ENCODE measurements at regions of chr14 and their contacts with region 1.

Region 1: DNA sequence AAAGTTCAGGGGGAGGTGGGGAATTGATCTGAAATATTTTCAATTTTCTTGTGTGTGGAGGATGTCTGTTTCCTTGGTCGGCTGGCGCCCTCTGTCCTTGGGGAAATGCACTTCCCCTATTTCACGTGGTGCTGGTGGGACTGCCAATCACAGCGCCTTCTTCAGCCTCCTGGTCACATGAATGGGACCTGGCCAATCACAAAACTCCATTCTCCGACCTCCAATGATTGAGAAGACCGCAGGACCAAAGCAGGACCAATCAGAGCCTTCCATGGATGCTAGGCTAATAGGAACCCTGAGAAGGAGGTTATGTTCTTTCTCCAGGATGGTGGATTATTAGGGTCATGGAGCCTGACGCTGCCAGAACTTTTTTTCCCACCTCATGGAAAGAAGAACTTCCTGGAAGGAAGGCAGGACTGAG is 188.6 kb downstream of the TTC8 start:
- DNase-seq: peak; percentile 82
- H3K4me3 ChIP-seq: peak overlapping the region; percentile 15
- H3K27ac ChIP-seq: peak overlapping the region; percentile 50
- H3K4me1 ChIP-seq: no peaks in the 10 kb centered on the region
- H3K27me3 ChIP-seq: no peaks in the 10 kb centered on the region
- CTCF ChIP-seq: peak; percentile 54

Region 2: GRCh38 chr14:88919502-88919901 is 93.6 kb before region 1 on chr14:
- intact Hi-C with region 1: loop called (anchors 5 kb)
- DNase-seq: peak; percentile 46
- H3K4me3 ChIP-seq: no peak overlapping the region
- H3K27ac ChIP-seq: no peak overlapping the region
- H3K4me1 ChIP-seq: no peaks in the 10 kb centered on the region
- H3K27me3 ChIP-seq: no peaks in the 10 kb centered on the region
- CTCF ChIP-seq: no peak

Region 3: GRCh38 chr14:88955455-88955854 is 57.6 kb before region 1 on chr14:
- intact Hi-C with region 1: no loop called
- DNase-seq: no peak
- H3K4me3 ChIP-seq: no peak overlapping the region
- H3K27ac ChIP-seq: no peak overlapping the region
- H3K4me1 ChIP-seq: no peaks in the 10 kb centered on the region
- H3K27me3 ChIP-seq: no peaks in the 10 kb centered on the region
- CTCF ChIP-seq: no peak

Region 4: DNA sequence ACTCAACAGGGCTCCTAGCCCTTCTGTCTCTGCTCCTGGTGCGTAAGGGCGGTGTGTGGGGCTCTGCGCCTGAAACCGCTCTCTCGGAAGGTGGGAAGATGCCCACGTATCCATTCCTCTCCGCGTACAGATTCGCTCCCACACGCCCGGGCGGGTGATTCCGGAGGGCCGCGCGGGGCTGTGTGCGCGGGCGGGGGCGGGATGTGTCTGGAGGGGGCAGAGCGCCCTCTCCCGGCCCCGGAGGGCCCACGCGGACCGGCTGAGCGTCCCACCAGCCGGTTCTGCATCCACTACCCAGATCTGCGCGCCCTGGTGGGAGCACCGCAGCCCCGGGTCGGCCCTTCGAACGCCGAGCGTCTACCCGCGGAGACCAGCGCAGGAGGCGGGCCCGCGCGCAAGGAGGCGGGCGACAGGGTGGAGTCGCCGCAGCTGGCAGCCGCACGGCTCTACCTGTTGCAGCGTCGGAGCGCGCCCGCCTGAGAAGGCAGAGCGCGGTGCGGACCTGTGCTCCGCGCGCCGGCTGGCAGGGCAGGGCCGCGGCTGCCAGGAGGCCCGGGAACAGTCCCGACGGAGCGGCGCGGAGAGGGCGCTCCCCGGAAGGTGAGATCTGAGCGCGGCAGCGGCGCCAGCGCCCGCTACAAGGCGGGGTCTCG is 1047.3 kb after region 1 on chr14:
- intact Hi-C with region 1: no loop called
- DNase-seq: peak; percentile 42
- H3K4me3 ChIP-seq: peak overlapping the region; percentile 44
- H3K27ac ChIP-seq: no peak overlapping the region
- H3K4me1 ChIP-seq: peaks cover 19% of the 10 kb centered on the region
- H3K27me3 ChIP-seq: peaks cover 45% of the 10 kb centered on the region
- CTCF ChIP-seq: peak; percentile 28